Right cardiac atrium (tissue), 5 donors: ENCODE measurements at regions of chr10 and their contacts with region 1.

Region 1: GRCh38 chr10:3785257-3785850 is 345 bp upstream of the KLF6 start:
- DNase-seq: peak; percentile 99 to 100 (median 99)
- ATAC-seq: peak; percentile 89 to 92
- H3K4me3 ChIP-seq: peak overlapping the region; percentile 91
- H3K27ac ChIP-seq: peak overlapping the region; percentile 98
- H3K4me1 ChIP-seq: peaks cover 3% of the 10 kb centered on the region
- H3K27me3 ChIP-seq: no peaks in the 10 kb centered on the region

Region 2: GRCh38 chr10:3119796-3120459 is 665.4 kb before region 1 on chr10:
- intact Hi-C with region 1: no loop called
- DNase-seq: peak in 2 of 3 donors; percentile 55 to 70
- ATAC-seq: no peak
- H3K4me3 ChIP-seq: no peak overlapping the region
- H3K27ac ChIP-seq: no peak overlapping the region
- H3K4me1 ChIP-seq: no peaks in the 10 kb centered on the region
- H3K27me3 ChIP-seq: no peaks in the 10 kb centered on the region

Region 3: DNA sequence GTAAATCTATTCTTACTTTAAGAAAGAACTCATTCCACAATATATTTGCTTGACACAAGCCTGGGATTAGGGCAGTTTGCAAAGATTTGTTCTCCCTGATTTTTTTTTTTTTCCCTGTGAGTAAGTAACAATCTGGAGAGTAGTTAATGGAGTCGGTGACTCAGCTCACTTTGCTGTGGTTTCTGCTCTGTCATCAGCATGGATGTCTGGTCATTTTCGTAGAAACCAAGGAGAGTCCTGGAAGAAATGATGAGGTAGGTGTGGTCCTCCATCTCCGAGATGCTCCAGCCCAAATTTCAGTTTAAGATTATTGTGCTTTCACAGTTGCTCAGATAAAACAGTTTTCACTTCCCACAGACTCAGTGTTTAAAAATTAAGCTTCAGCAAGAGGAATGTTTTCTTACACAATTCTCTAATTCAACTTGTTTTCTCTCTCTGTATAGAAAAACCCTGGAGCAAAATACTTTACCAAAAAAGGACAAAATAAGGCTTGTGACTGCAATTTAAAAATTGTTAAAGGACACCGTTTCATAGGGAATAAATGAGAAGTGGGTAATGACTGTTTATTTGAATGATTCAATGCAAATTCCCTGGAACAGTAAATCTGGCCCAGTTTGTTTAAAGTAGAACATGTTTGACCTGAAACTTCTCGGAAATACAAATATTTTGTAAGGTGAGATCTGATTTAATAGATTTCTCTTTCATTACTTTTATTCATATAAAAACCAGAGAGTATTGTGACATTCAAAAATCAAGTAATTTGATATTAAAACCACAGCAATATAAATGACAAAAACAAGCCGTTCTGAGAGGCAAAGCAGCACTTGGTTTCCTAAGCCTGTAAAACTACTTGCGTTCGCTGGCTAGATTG is 536.2 kb before region 1 on chr10:
- intact Hi-C with region 1: loop called in 1 of 4 experiments (anchors 10 kb)
- DNase-seq: no peak
- ATAC-seq: peak; percentile 64 to 79
- H3K4me3 ChIP-seq: no peak overlapping the region
- H3K27ac ChIP-seq: peak overlapping the region; percentile 17
- H3K4me1 ChIP-seq: no peaks in the 10 kb centered on the region
- H3K27me3 ChIP-seq: no peaks in the 10 kb centered on the region

Region 4: DNA sequence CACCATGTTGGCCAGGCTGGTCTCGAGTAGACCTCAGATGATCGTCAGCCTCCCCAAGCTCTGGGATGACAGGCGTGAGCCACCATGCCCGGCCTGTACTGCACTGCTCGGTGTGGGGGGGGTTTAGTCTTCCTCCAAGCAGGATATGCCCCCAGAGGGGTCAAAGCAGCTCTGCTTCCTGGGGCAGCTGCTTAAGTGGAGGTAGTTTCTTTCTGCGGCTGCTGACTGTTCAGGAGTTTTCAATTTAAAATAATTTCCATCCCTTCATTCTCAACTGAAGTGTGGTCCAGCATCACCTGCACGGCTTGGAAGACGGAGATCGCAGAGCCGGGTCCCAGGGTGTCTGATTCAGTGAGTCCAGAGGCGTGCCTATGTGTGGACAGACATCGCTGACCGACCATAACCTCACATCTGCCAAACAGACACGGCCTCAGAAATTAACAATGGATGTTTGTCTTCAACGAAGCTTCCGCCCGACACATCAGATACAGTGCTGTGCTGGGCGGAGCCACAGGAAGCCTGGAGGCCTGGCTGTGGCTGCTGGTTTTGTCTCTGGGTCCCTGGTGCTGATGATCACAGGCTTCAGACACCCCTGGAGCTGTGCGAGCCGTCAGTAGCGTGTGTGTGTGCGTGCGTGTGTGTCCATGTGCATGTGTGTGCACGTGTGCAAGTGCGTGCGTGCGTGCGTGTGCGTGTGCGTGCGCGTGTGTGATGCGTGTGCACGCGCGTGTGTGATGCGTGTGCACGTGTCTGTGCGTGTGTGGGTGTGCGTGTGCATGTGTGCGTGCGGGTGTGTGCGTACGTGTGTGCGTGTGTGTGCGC is 386.3 kb before region 1 on chr10:
- intact Hi-C with region 1: no loop called
- DNase-seq: peak in 2 of 3 donors; percentile 35 to 66
- ATAC-seq: peak; percentile 68 to 90
- H3K4me3 ChIP-seq: no peak overlapping the region
- H3K27ac ChIP-seq: peak overlapping the region; percentile 14
- H3K4me1 ChIP-seq: peaks cover 2% of the 10 kb centered on the region
- H3K27me3 ChIP-seq: no peaks in the 10 kb centered on the region

Region 5: DNA sequence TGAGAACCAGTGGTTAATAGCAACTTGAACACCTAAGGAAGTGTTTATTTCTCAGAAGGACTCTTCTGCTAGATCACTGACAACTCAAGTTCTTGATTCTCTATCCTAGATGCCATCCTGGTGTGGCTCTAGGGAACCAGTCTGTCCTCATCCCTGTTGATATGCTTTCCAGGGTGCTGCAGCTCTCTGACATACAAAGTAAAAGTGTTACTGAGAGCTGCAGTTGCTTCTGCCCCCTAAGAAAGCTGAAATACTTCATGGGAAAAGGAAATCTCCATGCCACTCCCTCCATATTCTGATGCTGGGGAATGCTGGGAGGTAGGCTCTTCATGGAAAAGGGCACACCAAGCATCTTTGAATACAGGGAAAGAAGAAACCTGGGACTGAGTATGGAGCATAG is 168.5 kb before region 1 on chr10:
- intact Hi-C with region 1: no loop called
- DNase-seq: no peak
- ATAC-seq: no peak
- H3K4me3 ChIP-seq: no peak overlapping the region
- H3K27ac ChIP-seq: no peak overlapping the region
- H3K4me1 ChIP-seq: no peaks in the 10 kb centered on the region
- H3K27me3 ChIP-seq: no peaks in the 10 kb centered on the region

Region 6: DNA sequence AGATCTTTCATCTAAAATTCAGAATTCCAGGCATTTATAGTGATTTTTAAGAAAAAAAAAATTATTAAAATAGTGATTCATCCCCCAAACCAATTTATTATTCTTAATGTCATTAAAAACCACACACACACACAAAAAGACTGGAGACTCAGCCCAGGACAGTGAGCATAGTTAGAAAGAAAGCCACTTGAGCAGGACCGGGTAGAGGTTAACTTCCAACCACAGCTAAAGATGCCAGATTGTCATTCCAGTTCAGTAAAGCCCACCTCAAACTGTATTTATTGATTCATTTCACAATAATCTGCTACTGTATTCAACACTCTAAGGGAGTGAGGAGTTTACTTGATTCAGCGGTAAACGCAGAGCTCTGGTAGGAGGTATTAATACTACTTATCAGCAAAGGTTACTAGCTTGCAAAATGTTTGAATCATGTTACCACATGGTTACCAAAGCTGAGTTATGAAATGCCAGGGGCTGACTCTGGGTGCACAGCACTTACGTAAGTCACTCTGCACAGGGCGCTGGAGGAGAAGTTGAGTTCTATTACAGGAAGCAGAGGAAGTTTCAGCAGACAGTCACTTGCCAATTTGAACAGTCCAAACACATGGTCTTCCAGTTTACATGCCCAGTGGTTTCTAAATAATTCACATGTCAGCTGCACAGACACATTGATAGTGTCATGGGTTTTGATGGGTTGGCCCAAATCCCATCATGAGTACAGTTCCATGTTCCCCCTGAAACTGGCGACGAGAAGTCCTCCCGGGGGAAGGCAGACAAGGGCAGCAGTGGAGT is 64.9 kb before region 1 on chr10:
- intact Hi-C with region 1: no loop called
- DNase-seq: peak; percentile 52 to 65 (median 65)
- ATAC-seq: peak; percentile 86 to 91
- H3K4me3 ChIP-seq: no peak overlapping the region
- H3K27ac ChIP-seq: no peak overlapping the region
- H3K4me1 ChIP-seq: peaks cover 3% of the 10 kb centered on the region
- H3K27me3 ChIP-seq: no peaks in the 10 kb centered on the region

Region 7: DNA sequence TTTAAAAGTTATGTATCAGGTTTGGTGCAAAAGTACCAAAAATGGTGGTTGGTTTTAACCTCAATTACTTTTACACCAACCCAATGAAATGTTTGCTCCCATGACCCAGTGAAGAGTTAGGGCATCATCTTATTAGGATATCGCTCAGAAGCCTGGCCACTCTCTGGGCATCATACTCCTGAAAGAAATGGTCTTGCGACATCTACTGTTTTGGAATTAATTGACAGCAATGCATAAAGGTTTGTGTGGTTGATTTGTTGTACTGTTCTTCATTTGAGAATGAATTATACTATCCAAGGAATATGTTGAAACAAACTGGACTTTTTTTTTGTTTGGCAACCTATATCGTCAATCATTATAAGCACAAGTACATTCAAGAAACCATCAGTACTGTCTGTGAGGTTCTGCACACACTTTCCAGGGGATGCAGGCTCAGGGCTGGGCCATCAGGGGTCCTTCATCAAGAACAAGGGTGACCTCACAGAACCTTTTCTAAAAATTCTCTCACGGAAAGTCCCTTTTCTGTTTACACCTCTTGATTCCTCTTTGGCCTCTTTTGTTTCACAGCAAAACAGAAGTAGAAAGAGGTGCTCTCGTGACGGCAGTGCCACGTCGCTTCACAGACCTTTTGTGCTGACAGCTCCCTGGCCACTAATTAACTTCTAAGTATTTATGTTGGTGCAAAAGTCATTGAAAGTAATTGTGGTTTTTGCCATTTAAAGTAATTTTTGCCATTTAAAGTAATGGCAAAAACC is 116.9 kb after region 1 on chr10:
- intact Hi-C with region 1: loop called in 1 of 4 experiments (anchors 10 kb)
- DNase-seq: no peak
- ATAC-seq: peak in 1 of 2 donors; percentile 58
- H3K4me3 ChIP-seq: no peak overlapping the region
- H3K27ac ChIP-seq: peak overlapping the region; percentile 48
- H3K4me1 ChIP-seq: peaks cover 3% of the 10 kb centered on the region
- H3K27me3 ChIP-seq: no peaks in the 10 kb centered on the region

Region 8: DNA sequence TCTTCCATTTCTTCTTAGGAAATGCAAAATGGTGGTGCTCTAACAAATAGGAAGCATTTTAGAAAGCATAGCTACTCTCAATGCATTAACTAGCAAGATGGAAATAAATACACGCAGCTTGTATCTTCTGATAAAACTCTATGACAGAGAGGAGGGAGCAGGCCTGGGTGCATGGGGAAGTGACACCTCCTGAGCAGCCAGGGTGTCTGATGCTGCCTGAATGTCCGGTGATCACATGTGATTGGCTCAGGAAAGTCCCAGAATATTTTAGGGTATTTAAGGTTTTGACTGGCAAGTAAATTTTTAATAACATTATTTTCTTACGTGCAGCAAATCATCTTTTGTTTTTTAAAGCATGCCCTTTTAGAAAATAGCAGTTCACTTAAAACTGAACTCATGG is 260.7 kb after region 1 on chr10:
- intact Hi-C with region 1: loop called in 1 of 4 experiments (anchors 10 kb)
- DNase-seq: no peak
- ATAC-seq: no peak
- H3K4me3 ChIP-seq: no peak overlapping the region
- H3K27ac ChIP-seq: no peak overlapping the region
- H3K4me1 ChIP-seq: no peaks in the 10 kb centered on the region
- H3K27me3 ChIP-seq: no peaks in the 10 kb centered on the region

Region 9: DNA sequence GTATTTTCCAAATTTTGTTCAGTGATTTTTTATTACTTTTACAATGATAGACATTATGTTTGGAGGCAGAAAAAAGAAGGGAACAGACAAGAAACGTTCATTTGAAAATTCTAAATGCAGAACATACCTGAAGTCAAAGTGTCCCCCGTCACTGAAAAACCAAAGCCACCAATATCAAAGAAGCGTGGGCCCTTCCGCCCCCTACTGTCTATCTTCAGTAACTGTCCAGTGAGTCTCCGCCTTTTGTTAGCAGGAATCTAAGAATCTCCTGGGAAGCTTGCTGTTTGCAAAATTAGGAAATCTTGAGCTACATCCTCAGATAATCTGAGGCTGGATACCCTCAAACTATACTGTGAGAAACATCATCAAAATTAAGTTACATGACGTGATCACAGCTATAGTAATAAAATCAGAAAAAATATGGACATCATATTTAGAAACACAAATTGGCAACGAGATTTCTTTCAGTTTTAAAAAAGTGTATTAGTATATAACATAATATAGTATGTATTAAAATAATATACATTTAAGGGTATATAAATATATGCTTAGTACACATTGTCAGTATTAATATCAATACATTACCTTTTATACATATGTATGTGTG is 871.3 kb after region 1 on chr10:
- intact Hi-C with region 1: loop called in 1 of 4 experiments (anchors 10 kb)
- DNase-seq: peak in 2 of 3 donors; percentile 54 to 70
- ATAC-seq: peak in 1 of 2 donors; percentile 62
- H3K4me3 ChIP-seq: no peak overlapping the region
- H3K27ac ChIP-seq: no peak overlapping the region
- H3K4me1 ChIP-seq: no peaks in the 10 kb centered on the region
- H3K27me3 ChIP-seq: no peaks in the 10 kb centered on the region